OCI-LY7 (cell line): ENCODE measurements at regions of chr14 and their contacts with region 1.

Region 1: GRCh38 chr14:87186737-87187136 is 806.2 kb downstream of the GALC start:
- DNase-seq: no peak
- H3K4me3 ChIP-seq: no peak overlapping the region
- H3K27ac ChIP-seq: no peak overlapping the region
- H3K4me1 ChIP-seq: peaks cover 9% of the 10 kb centered on the region
- CTCF ChIP-seq: no peak

Region 2: DNA sequence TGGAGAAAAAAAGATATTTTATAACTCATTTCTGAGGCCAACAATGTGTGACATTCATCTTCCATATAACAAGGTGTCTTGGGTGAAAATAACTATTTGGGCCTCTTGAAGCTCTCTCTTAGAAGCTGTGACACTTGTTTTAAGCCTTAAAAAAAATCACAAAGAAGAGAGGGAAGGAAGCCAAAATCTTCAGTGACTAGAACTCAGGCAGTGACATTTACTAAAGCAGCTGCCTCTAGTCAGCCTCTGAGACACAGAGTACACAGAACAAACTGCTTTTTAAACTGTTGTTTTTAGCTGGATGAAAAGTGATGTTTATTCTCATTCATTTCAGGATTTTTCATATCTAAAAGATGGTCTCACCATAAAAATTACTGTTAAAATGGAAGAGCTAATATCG is 12.6 kb after region 1 on chr14:
- CTCF ChIA-PET with region 1: no interaction called
- POLR2A ChIA-PET with region 1: interaction called, 13 read pairs
- intact Hi-C with region 1: no loop called
- DNase-seq: no peak
- H3K4me3 ChIP-seq: no peak overlapping the region
- H3K27ac ChIP-seq: no peak overlapping the region
- H3K4me1 ChIP-seq: no peaks in the 10 kb centered on the region
- CTCF ChIP-seq: no peak